ENCODE measurements at regions of chr7 and their contacts with region 1.

Region 1: GRCh38 chr7:77247206-77247850 is 47.7 kb upstream of the FGL2 start:
- DNase-seq: peak; percentile 95
- H3K4me3 Mint-ChIP-seq: no peak overlapping the region
- H3K27ac Mint-ChIP-seq: no peak overlapping the region
- H3K4me1 Mint-ChIP-seq: peaks cover 2% of the 10 kb centered on the region
- H3K27me3 Mint-ChIP-seq: no peaks in the 10 kb centered on the region

Region 2: GRCh38 chr7:77199013-77199966 is 48.0 kb before region 1 on chr7 and contains the start of gene FGL2:
- CTCF ChIA-PET with region 1: interaction called, 10 read pairs
- intact Hi-C with region 1: loop called (anchors 10 kb)
- DNase-seq: peak; percentile 47
- H3K4me3 Mint-ChIP-seq: peak within 1 kb of the TSS; percentile 74
- H3K27ac Mint-ChIP-seq: no peak within 1 kb of the TSS
- H3K4me1 Mint-ChIP-seq: peaks cover 19% of the 10 kb centered on the region
- H3K27me3 Mint-ChIP-seq: no peaks in the 10 kb centered on the region
- total RNA-seq, gene FGL2: not detected

Region 3: DNA sequence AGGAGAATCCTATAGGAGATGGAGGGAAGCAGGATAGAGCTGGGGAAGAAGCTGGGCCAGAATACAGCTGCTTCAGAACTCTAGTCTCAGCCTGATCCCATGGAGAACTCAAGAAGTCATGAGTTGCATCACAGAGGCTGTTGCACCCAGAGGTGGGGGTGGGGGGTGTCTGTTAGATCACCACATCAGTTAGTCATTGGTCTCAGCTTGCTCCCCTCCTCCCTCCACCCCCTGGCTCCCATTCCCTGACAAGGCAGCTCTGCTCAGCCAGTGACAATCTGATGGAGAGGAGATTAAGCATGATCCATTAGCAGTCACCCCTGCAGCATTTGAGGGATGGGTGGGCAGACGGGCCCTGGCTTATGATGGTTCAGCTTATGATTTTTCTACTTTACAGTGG is 10.7 kb after region 1 on chr7:
- CTCF ChIA-PET with region 1: interaction called, 11 read pairs
- intact Hi-C with region 1: no loop called
- DNase-seq: no peak
- H3K4me3 Mint-ChIP-seq: no peak overlapping the region
- H3K27ac Mint-ChIP-seq: no peak overlapping the region
- H3K4me1 Mint-ChIP-seq: no peaks in the 10 kb centered on the region
- H3K27me3 Mint-ChIP-seq: no peaks in the 10 kb centered on the region

Region 4: GRCh38 chr7:77525231-77525630 is 277.9 kb after region 1 on chr7:
- CTCF ChIA-PET with region 1: no interaction called
- intact Hi-C with region 1: no loop called
- DNase-seq: no peak
- H3K4me3 Mint-ChIP-seq: no peak overlapping the region
- H3K27ac Mint-ChIP-seq: no peak overlapping the region
- H3K4me1 Mint-ChIP-seq: peaks cover 8% of the 10 kb centered on the region
- H3K27me3 Mint-ChIP-seq: no peaks in the 10 kb centered on the region